Psoas muscle (tissue), 8 donors: ENCODE measurements at regions of chr11 and their contacts with region 1.

Region 1: DNA sequence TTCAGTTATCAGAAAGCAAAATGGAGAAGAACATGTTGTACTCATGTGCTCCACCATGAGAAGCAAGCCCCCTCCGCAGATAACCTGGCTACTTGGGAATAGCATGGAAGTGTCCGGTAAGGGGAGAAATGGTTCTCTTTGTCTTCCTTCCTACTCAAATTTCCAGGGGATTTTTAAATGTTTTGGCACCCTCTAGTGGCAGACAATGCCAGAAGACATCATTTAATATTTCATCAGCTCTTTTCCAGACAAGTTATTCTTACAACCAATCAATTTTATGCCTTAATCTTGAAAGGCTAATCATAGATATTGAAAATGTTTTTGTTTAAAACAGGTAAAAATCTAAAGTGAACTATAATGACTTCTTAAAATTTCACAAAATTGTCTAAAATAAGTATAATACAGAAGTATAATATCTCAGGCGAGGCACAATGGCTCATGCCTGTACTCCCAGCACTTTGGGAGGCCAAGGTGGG is 15.7 kb downstream of the CRTAM start:
- DNase-seq: no peak
- ATAC-seq: peak in 2 of 4 donors; percentile 23 to 61
- H3K4me3 ChIP-seq: no peak overlapping the region
- H3K27ac ChIP-seq: no peak overlapping the region
- H3K4me1 ChIP-seq: no peaks in the 10 kb centered on the region
- H3K27me3 ChIP-seq: no peaks in the 10 kb centered on the region
- CTCF ChIP-seq: peak; percentile 63

Region 2: DNA sequence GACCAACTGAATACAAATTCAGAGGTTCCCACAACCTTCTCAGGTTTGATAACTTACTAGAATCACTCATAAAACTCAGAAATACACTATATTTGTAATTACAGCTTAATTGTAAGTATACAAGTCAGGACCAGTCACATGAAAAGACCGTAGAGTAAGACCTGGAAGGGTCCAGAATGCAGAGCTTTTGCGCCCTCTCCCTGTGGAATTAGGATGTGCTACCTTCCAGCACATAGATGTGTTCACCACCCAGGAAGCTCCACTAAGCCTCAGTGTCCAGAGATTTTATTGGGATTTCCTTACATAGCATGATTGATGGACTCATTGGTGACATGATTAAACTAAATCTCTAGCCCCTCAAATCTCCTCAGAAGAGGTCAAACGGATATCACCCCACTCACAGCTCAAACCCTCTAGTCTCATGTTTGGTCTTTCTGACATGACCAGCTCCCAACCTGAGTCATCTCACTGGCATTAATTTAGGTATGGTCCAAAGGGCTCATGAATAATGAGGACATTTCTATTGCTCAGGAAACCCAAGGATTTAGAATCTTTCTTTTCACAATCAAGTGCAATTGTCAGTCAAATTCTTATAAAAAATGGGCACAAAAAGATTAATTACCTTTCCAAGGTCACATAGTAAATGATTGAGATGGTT is 275.7 kb before region 1 on chr11:
- intact Hi-C with region 1: loop called in 1 of 2 experiments (anchors 2 kb)
- DNase-seq: no peak
- ATAC-seq: no peak
- H3K4me3 ChIP-seq: no peak overlapping the region
- H3K27ac ChIP-seq: no peak overlapping the region
- H3K4me1 ChIP-seq: no peaks in the 10 kb centered on the region
- H3K27me3 ChIP-seq: no peaks in the 10 kb centered on the region
- CTCF ChIP-seq: no peak

Region 3: GRCh38 chr11:122633219-122633829 is 220.7 kb before region 1 on chr11:
- intact Hi-C with region 1: loop called in 1 of 2 experiments (anchors 5 kb)
- DNase-seq: peak in 1 of 2 donors; percentile 54
- ATAC-seq: peak; percentile 57 to 76 (median 62)
- H3K4me3 ChIP-seq: no peak overlapping the region
- H3K27ac ChIP-seq: no peak overlapping the region
- H3K4me1 ChIP-seq: no peaks in the 10 kb centered on the region
- H3K27me3 ChIP-seq: peaks cover 0 to 6% (median 0%) of the 10 kb centered on the region in 3 donors
- CTCF ChIP-seq: peak; percentile 57

Region 4: DNA sequence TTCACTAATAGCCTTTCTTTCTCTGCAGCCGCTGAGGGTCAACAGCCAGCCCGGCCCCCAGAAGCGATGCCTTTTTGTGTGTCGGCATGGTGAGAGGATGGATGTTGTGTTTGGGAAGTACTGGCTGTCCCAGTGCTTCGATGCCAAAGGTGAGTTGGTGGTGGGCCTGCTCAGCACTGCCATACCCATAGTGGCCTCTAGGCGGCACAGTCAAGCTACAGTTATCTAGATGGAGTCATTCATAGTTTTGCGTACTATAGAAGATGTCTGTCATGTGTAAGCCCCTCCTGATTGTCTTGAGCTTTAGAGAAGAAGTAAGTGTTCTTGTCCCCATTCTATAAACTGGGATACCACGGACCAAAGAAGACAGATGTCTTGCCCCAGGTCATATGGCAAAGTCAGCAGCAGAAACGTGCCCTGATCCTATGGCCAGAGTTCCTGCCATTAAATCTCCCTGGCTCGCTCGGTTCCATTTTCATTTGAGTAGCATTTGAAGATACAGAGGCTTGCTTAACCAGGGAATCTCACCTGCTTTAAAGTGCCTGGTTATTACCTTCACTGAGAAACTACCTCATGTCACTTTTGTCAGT is 57.8 kb before region 1 on chr11:
- intact Hi-C with region 1: loop called (anchors 5 kb)
- DNase-seq: peak; percentile 31 to 56
- ATAC-seq: no peak
- H3K4me3 ChIP-seq: no peak overlapping the region
- H3K27ac ChIP-seq: no peak overlapping the region
- H3K4me1 ChIP-seq: peaks cover 9% of the 10 kb centered on the region
- H3K27me3 ChIP-seq: no peaks in the 10 kb centered on the region
- CTCF ChIP-seq: peak; percentile 59

Region 5: DNA sequence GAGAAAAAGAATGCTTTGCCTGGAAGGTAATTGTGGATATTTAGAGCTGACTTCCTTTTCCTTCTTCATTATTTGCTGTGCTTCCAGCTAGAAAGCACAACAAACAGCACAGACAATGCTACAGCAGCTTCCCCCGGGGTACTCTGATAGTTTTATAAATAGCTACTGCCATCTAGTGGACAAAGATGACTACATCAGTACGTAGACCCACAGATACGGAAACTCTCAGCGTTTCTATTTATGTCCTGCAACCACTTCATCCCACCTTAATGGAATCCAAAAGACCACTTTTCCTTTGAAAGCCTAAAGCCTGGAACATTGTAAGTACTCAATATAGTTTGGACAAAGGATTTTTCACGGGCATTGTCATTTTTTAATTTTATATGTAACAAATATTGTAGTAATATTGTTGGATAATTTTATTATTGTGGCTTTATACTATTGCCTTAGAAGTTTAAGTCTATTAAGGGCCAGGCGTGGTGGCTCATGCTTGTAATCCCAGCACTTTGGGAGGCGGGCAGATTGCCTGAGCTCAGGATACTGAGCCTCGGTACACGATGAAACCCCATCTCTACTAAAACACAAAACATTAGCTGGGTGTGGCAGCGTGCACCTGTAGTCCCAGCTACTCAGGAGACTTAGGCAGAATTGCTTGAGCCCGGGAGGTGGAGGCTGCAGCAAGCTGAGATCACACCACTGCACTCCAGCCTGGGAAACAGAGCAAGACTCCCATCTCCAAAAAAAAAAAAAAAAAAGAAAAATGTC is 200.5 kb after region 1 on chr11:
- intact Hi-C with region 1: loop called in 1 of 2 experiments (anchors 5 kb)
- DNase-seq: no peak
- ATAC-seq: peak; percentile 72 to 87 (median 80)
- H3K4me3 ChIP-seq: no peak overlapping the region
- H3K27ac ChIP-seq: no peak overlapping the region
- H3K4me1 ChIP-seq: peaks cover 39% of the 10 kb centered on the region
- H3K27me3 ChIP-seq: no peaks in the 10 kb centered on the region
- CTCF ChIP-seq: peak; percentile 71